Dendritic cell treated with granulocyte-macrophage colony-stimulating factor and Interleukin-4, amounts not matched to agents 40 ng/mL and 50 ng/mL, for 4 days (primary cell): ENCODE measurements at regions of chr22 and their contacts with region 1.

Region 1: GRCh38 chr22:46296257-46297150 is at the start of gene GTSE1:
- H3K4me3 Mint-ChIP-seq: peak within 1 kb of the TSS; percentile 87
- H3K27ac Mint-ChIP-seq: peak within 1 kb of the TSS; percentile 97
- H3K4me1 Mint-ChIP-seq: peaks cover 48% of the 10 kb centered on the region
- H3K27me3 Mint-ChIP-seq: no peaks in the 10 kb centered on the region

Region 2: GRCh38 chr22:46006379-46007002 is 290.0 kb before region 1 on chr22:
- intact Hi-C with region 1: loop called (anchors 10 kb)
- H3K4me3 Mint-ChIP-seq: peak overlapping the region; percentile 59
- H3K27ac Mint-ChIP-seq: peak overlapping the region; percentile 82
- H3K4me1 Mint-ChIP-seq: peaks cover 67% of the 10 kb centered on the region
- H3K27me3 Mint-ChIP-seq: no peaks in the 10 kb centered on the region

Region 3: DNA sequence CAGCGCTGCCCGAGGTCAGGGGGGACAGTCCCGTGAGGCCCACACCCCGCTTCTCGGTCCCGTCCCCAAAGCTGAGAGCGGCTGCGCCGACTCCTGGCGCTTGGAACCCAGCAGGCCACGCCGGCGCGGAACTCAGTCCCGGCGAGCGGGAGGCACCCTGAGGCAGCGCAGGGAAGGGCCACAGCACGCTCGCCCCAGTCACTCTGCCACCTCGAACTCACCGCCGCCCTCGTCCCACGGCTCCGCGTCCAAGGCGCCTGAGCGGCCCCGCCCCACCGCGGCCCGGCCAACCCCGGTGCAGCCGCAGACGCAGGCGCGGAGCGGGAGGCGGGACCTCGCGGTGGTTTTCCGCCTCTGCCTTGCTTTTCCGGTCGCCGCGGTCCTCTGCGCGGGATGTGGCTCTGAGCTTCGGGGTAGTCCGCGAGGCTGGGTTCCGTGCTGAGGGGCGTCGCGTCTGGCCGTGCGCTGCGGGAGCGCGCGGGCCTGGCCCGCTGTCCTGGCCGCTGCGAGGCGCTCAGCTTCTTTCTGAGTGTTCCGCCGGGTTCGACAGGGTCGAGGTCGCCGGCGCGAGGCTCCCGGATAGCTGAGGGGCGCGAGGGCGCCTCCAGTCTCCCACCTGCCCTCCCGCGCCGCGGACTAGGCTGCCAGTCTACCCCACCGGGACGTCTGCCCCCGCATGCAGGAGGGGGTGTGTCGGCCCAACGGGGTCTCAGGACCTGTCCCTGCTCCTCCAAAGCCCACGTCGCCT is 46.3 kb before region 1 on chr22 and contains the start of gene CDPF1:
- intact Hi-C with region 1: loop called (anchors 5 kb)
- H3K4me3 Mint-ChIP-seq: peak within 1 kb of the TSS; percentile 90
- H3K27ac Mint-ChIP-seq: peak within 1 kb of the TSS; percentile 91
- H3K4me1 Mint-ChIP-seq: peaks cover 28% of the 10 kb centered on the region
- H3K27me3 Mint-ChIP-seq: no peaks in the 10 kb centered on the region

Region 4: GRCh38 chr22:46335201-46336118 is 39.0 kb after region 1 on chr22 and contains the start of gene TRMU:
- intact Hi-C with region 1: loop called (anchors 1 kb)
- H3K4me3 Mint-ChIP-seq: peak within 1 kb of the TSS; percentile 88
- H3K27ac Mint-ChIP-seq: peak within 1 kb of the TSS; percentile 97
- H3K4me1 Mint-ChIP-seq: peaks cover 15% of the 10 kb centered on the region
- H3K27me3 Mint-ChIP-seq: no peaks in the 10 kb centered on the region

Region 5: GRCh38 chr22:46377566-46378425 is 81.3 kb after region 1 on chr22:
- intact Hi-C with region 1: no loop called
- H3K4me3 Mint-ChIP-seq: no peak overlapping the region
- H3K27ac Mint-ChIP-seq: no peak overlapping the region
- H3K4me1 Mint-ChIP-seq: no peaks in the 10 kb centered on the region
- H3K27me3 Mint-ChIP-seq: peaks cover 24% of the 10 kb centered on the region